B cell (primary cell): ENCODE measurements at regions of chr22 and their contacts with region 1.

Region 1: DNA sequence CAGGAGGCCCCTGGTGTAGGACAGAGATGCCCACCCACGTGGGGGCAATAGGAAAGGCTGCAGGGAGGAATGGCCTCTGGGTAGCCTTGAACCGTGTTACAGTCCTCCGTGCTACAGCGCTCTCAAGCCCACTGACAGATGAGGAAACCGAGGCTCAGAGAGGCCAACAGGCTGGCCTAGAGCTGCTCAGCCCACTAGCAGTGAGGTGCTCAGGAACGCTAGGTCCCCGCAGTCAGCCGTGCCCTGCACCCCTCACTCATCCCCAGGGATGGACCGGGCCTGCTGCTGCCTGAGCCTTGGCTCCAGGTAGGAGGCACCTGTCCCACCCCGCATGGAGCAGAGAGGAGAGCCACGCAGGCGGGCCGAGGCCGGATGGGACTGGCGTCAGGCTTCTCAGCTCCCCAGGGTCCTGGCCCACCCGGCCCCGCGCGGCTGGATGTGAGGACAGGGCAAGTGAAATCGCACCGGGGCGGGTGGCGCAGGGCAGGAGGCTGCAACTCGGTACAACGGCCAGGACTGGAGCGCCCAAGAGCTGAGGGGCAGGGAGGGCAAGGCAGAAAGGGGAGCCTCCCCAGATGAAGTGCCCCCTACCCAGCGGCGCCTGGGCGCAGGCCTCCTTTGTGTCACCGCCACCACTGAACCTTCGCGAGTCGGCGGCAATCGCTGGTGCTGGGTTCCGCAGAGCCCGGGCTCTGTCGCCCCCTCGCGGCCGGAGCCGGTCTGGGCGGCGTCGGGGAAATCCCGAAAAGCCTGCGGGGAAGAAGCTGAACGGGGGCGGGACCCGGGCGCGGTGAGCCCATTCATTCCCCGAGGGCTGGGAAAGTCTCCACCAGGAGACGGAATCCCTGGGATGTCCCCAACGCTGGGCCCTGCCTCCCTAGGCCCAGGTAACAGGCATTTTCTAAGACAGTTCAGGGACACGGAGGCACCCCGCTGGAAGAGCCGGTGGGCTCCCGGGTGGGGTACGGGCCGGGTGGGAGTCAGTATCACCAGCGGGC is 8.4 kb upstream of the SLC2A11 start:
- DNase-seq: peak; percentile 89
- ATAC-seq: peak; percentile 80
- H3K4me3 ChIP-seq: peak overlapping the region in 3 of 5 experiments; percentile 35 to 54 (median 40)
- H3K4me3 Mint-ChIP-seq: peak overlapping the region; percentile 52
- H3K27ac ChIP-seq: no peak overlapping the region
- H3K27ac Mint-ChIP-seq: peak overlapping the region; percentile 61
- H3K4me1 ChIP-seq: peaks cover 38 to 62% of the 10 kb centered on the region in 2 donors
- H3K4me1 Mint-ChIP-seq: peaks cover 68% of the 10 kb centered on the region
- H3K27me3 ChIP-seq: no peaks in the 10 kb centered on the region
- H3K27me3 Mint-ChIP-seq: no peaks in the 10 kb centered on the region
- CTCF ChIP-seq: peak; percentile 94

Region 2: GRCh38 chr22:23539135-23539838 is 310.0 kb before region 1 on chr22:
- CTCF ChIA-PET with region 1: interaction called, 4 read pairs
- POLR2A ChIA-PET with region 1: no interaction called
- intact Hi-C with region 1: loop called (anchors 5 kb)
- DNase-seq: peak; percentile 83
- ATAC-seq: peak; percentile 100
- H3K4me3 ChIP-seq: peak overlapping the region in 1 of 5 experiments; percentile 12
- H3K4me3 Mint-ChIP-seq: peak overlapping the region; percentile 42
- H3K27ac ChIP-seq: no peak overlapping the region
- H3K27ac Mint-ChIP-seq: no peak overlapping the region
- H3K4me1 ChIP-seq: peaks cover 0 to 20% of the 10 kb centered on the region in 2 donors
- H3K4me1 Mint-ChIP-seq: peaks cover 21% of the 10 kb centered on the region
- H3K27me3 ChIP-seq: peaks cover 0 to 2% (median 0%) of the 10 kb centered on the region in 4 experiments
- H3K27me3 Mint-ChIP-seq: no peaks in the 10 kb centered on the region
- CTCF ChIP-seq: peak; percentile 81

Region 3: GRCh38 chr22:23716811-23717801 is 132.2 kb before region 1 on chr22:
- CTCF ChIA-PET with region 1: interaction called, 13 read pairs
- POLR2A ChIA-PET with region 1: no interaction called
- intact Hi-C with region 1: no loop called
- DNase-seq: peak; percentile 89
- ATAC-seq: peak; percentile 95
- H3K4me3 ChIP-seq: peak overlapping the region in 4 of 5 experiments; percentile 82 to 88 (median 88)
- H3K4me3 Mint-ChIP-seq: peak overlapping the region; percentile 89
- H3K27ac ChIP-seq: peak overlapping the region; percentile 61 to 84
- H3K27ac Mint-ChIP-seq: peak overlapping the region; percentile 89
- H3K4me1 ChIP-seq: peaks cover 13 to 19% of the 10 kb centered on the region in 2 donors
- H3K4me1 Mint-ChIP-seq: peaks cover 20% of the 10 kb centered on the region
- H3K27me3 ChIP-seq: no peaks in the 10 kb centered on the region
- H3K27me3 Mint-ChIP-seq: no peaks in the 10 kb centered on the region
- CTCF ChIP-seq: no peak

Region 4: DNA sequence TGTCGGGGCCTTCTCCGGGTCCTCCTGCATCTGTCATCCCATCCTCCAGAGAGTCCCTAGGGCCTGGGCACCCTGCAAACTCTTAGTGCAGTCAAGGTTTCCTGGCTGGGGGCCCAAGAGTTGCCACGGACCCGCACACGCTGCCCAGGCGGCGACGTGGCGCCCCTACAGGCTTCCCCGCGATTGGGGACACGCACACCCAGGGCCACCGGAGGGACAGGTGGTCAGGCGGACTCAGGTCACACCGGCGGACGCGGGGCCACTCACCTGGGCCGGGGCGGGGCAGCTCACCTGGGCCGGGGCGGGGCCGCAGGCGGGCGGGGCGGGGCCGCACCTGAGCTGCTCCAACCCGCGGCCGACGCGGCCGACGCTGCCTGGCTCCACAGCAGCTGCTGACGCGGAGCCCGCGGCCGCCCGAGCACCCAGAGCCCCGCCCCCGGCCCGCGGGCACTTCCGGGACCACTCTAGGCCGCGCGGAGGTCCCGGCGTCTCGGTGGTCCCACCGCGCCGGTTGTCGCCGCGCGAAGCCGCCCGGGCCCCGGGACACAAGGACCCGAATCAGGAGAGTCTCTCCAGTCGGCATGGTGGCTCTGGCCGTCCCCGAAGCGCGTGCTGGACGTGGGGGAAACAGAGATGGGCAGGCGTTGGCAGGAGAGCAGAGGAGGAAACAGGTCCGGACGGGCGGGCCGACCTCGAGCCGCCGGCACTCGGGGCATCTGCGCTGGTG is 98.4 kb before region 1 on chr22 and contains the start of gene ZNF70:
- CTCF ChIA-PET with region 1: interaction called, 22 read pairs
- POLR2A ChIA-PET with region 1: interaction called, 39 read pairs
- intact Hi-C with region 1: no loop called
- DNase-seq: peak; percentile 92
- ATAC-seq: peak; percentile 56
- H3K4me3 ChIP-seq: peak within 1 kb of the TSS; percentile 6 to 88 (median 83)
- H3K4me3 Mint-ChIP-seq: peak within 1 kb of the TSS; percentile 93
- H3K27ac ChIP-seq: peak within 1 kb of the TSS; percentile 85 to 98
- H3K27ac Mint-ChIP-seq: peak within 1 kb of the TSS; percentile 99
- H3K4me1 ChIP-seq: peaks cover 24 to 53% of the 10 kb centered on the region in 2 donors
- H3K4me1 Mint-ChIP-seq: peaks cover 55% of the 10 kb centered on the region
- H3K27me3 ChIP-seq: no peaks in the 10 kb centered on the region
- H3K27me3 Mint-ChIP-seq: no peaks in the 10 kb centered on the region
- CTCF ChIP-seq: no peak
- total RNA-seq, gene ZNF70: 8.3 and 9.6 TPM in 2 replicates

Region 5: GRCh38 chr22:23774743-23775566 is 74.4 kb before region 1 on chr22:
- CTCF ChIA-PET with region 1: interaction called, 183 read pairs
- POLR2A ChIA-PET with region 1: interaction called, 12 read pairs
- intact Hi-C with region 1: no loop called
- DNase-seq: no peak
- ATAC-seq: no peak
- H3K4me3 ChIP-seq: no peak overlapping the region
- H3K4me3 Mint-ChIP-seq: peak overlapping the region; percentile 14
- H3K27ac ChIP-seq: no peak overlapping the region
- H3K27ac Mint-ChIP-seq: peak overlapping the region; percentile 33
- H3K4me1 ChIP-seq: peaks cover 23 to 34% of the 10 kb centered on the region in 2 donors
- H3K4me1 Mint-ChIP-seq: peaks cover 27% of the 10 kb centered on the region
- H3K27me3 ChIP-seq: no peaks in the 10 kb centered on the region
- H3K27me3 Mint-ChIP-seq: no peaks in the 10 kb centered on the region
- CTCF ChIP-seq: no peak

Region 6: GRCh38 chr22:23800297-23801237 is 48.7 kb before region 1 on chr22:
- CTCF ChIA-PET with region 1: interaction called, 11 read pairs
- POLR2A ChIA-PET with region 1: interaction called, 15 read pairs
- intact Hi-C with region 1: no loop called
- DNase-seq: peak; percentile 89
- ATAC-seq: peak; percentile 70
- H3K4me3 ChIP-seq: peak overlapping the region in 4 of 5 experiments; percentile 0 to 44 (median 4)
- H3K4me3 Mint-ChIP-seq: peak overlapping the region; percentile 81
- H3K27ac ChIP-seq: peak overlapping the region; percentile 92 to 93
- H3K27ac Mint-ChIP-seq: peak overlapping the region; percentile 96
- H3K4me1 ChIP-seq: peaks cover 63 to 76% of the 10 kb centered on the region in 2 donors
- H3K4me1 Mint-ChIP-seq: peaks cover 70% of the 10 kb centered on the region
- H3K27me3 ChIP-seq: no peaks in the 10 kb centered on the region
- H3K27me3 Mint-ChIP-seq: no peaks in the 10 kb centered on the region
- CTCF ChIP-seq: no peak

Region 7: DNA sequence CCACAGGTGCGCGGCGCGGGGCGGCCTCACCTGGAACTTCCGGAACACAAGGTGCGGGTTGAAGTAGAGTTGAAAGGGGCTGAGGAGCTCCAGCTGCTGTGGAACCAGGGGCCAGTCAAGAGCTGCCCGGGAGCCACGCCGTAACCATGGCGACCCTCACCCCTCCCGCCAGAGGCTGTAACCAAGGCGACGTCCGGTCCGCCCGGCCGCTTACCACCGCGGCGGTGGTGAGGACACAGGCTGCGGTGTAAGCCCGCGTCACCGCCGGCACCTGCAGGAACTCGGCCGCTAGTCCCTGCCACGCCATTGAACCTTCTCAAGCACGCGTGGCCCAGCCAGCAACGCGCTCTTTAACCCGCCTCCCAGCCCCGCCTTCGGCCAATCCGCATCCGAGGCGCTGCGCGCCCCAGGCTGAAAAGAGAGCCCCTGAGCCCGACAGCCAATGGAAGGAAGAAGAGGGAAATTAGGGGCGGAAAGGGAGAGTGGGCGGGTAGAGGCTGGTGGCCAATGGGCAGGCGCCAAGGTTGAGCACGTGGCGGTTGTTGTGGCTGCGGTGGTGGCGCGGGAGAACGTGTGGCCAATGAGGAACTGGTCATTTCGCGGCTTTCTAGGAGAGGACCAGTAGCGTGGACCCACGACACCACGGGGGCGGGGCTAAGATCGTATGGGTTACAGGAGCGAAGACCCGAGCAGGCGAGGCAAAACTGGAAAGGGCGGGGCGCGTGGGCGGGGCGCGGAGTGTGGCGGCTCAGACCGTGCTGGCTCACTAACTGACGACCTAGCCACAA is 10.4 kb before region 1 on chr22 and contains the start of gene DERL3:
- CTCF ChIA-PET with region 1: interaction called, 20 read pairs
- POLR2A ChIA-PET with region 1: interaction called, 12 read pairs
- intact Hi-C with region 1: no loop called
- DNase-seq: peak; percentile 100
- ATAC-seq: peak; percentile 78
- H3K4me3 ChIP-seq: peak within 1 kb of the TSS; percentile 38 to 83 (median 69)
- H3K4me3 Mint-ChIP-seq: peak within 1 kb of the TSS; percentile 89
- H3K27ac ChIP-seq: peak within 1 kb of the TSS; percentile 98
- H3K27ac Mint-ChIP-seq: peak within 1 kb of the TSS; percentile 99
- H3K4me1 ChIP-seq: peaks cover 45 to 60% of the 10 kb centered on the region in 2 donors
- H3K4me1 Mint-ChIP-seq: peaks cover 73% of the 10 kb centered on the region
- H3K27me3 ChIP-seq: no peaks in the 10 kb centered on the region
- H3K27me3 Mint-ChIP-seq: no peaks in the 10 kb centered on the region
- CTCF ChIP-seq: no peak
- total RNA-seq, gene DERL3: 74.1 and 77.0 TPM in 2 replicates

Region 8: GRCh38 chr22:23984430-23984829 is 135.1 kb after region 1 on chr22:
- CTCF ChIA-PET with region 1: no interaction called
- POLR2A ChIA-PET with region 1: no interaction called
- intact Hi-C with region 1: no loop called
- DNase-seq: no peak
- ATAC-seq: peak; percentile 78
- H3K4me3 ChIP-seq: no peak overlapping the region
- H3K4me3 Mint-ChIP-seq: no peak overlapping the region
- H3K27ac ChIP-seq: no peak overlapping the region
- H3K27ac Mint-ChIP-seq: no peak overlapping the region
- H3K4me1 ChIP-seq: no peaks in the 10 kb centered on the region
- H3K4me1 Mint-ChIP-seq: no peaks in the 10 kb centered on the region
- H3K27me3 ChIP-seq: peaks cover 0 to 8% (median 0%) of the 10 kb centered on the region in 4 experiments
- H3K27me3 Mint-ChIP-seq: no peaks in the 10 kb centered on the region
- CTCF ChIP-seq: peak; percentile 56